GM10248 (cell line): ENCODE measurements at regions of chr7 and their contacts with region 1.

Region 1: DNA sequence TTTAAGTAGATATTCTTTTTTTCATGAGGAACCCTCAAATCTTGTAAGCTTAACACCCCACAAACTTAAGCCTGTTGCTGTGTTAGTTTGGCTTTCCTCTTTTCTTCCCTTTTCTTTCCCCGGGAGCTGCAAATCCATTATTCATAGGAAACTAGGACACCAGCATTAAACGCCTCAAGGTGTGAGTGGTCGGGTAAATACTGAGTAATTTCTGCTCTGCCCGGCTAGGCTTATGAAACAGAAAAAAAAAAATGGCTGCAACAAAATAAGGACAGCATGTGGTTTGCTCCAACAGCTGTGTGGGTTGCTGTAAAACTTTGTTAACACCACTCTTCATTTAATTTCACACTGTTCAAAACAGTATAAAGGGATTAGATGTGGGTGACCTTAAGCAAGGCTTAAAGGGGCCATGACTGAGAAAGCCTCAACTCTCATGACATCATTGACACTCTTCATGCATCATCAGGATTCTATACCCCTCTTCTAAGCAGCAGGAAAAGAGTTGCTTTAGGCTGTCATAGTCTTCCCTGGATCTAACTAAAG is 104.1 kb downstream of the AOAH start:
- DNase-seq: no peak
- CTCF ChIP-seq: no peak

Region 2: DNA sequence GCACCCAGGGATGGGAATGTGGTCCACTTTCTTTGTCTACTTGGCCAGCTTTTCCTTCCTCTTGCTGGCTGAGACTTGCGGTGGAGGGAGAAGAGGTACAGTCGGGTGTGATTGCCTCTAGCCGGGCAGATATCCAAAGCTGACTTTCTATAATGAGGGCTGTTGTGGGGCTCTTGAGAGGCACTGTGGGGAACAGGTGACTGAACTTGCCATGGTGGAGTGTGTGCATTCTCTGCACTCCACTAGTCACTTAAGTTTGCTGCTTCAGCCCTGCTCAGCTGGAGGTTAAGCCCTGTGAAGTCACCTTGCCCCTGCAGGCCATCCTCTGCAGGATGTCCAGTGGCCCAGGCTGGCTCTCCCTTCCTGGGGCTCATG is 12.5 kb before region 1 on chr7:
- CTCF ChIA-PET with region 1: interaction called, 11 read pairs
- POLR2A ChIA-PET with region 1: no interaction called
- DNase-seq: no peak
- CTCF ChIP-seq: no peak

Region 3: GRCh38 chr7:36642414-36642813 is 22.2 kb after region 1 on chr7:
- CTCF ChIA-PET with region 1: no interaction called
- POLR2A ChIA-PET with region 1: no interaction called
- DNase-seq: no peak
- CTCF ChIP-seq: no peak

Region 4: GRCh38 chr7:36653008-36653670 is 32.9 kb after region 1 on chr7:
- CTCF ChIA-PET with region 1: no interaction called
- POLR2A ChIA-PET with region 1: no interaction called
- DNase-seq: no peak
- CTCF ChIP-seq: no peak

Region 5: GRCh38 chr7:36677769-36678437 is 57.7 kb after region 1 on chr7:
- CTCF ChIA-PET with region 1: no interaction called
- POLR2A ChIA-PET with region 1: no interaction called
- DNase-seq: no peak
- CTCF ChIP-seq: no peak

Region 6: GRCh38 chr7:36765605-36766004 is 145.4 kb after region 1 on chr7:
- CTCF ChIA-PET with region 1: no interaction called
- POLR2A ChIA-PET with region 1: no interaction called
- DNase-seq: no peak
- CTCF ChIP-seq: no peak